ENCODE measurements at regions of chr22 and their contacts with region 1.

Region 1: GRCh38 chr22:50582562-50583293 is at the start of gene CHKB:
- DNase-seq: peak; percentile 96 to 97 (median 96)
- H3K4me3 ChIP-seq: peak within 1 kb of the TSS; percentile 39 to 82 (median 51)
- H3K4me3 Mint-ChIP-seq: peak within 1 kb of the TSS; percentile 82 to 94
- H3K27ac ChIP-seq: peak within 1 kb of the TSS; percentile 83 to 92
- H3K27ac Mint-ChIP-seq: peak within 1 kb of the TSS; percentile 79 to 95 (median 92)
- H3K4me1 ChIP-seq: peaks cover 22 to 40% of the 10 kb centered on the region in 2 donors
- H3K4me1 Mint-ChIP-seq: peaks cover 32% of the 10 kb centered on the region
- H3K27me3 ChIP-seq: peaks cover 0 to 3% of the 10 kb centered on the region in 2 donors
- H3K27me3 Mint-ChIP-seq: peaks cover 6 to 13% (median 10%) of the 10 kb centered on the region in 3 donors
- CTCF ChIP-seq: no peak
- polyA plus RNA-seq, gene CHKB: 29.1 to 286 (median 31.3) TPM

Region 2: GRCh38 chr22:50417411-50418210 is 165.1 kb before region 1 on chr22:
- intact Hi-C with region 1: no loop called
- DNase-seq: peak in 2 of 3 donors; percentile 3 to 37
- H3K4me3 ChIP-seq: no peak overlapping the region
- H3K4me3 Mint-ChIP-seq: no peak overlapping the region
- H3K27ac ChIP-seq: peak overlapping the region in 1 of 2 donors; percentile 40
- H3K27ac Mint-ChIP-seq: peak overlapping the region in 4 of 7 donors; percentile 2 to 78 (median 58)
- H3K4me1 ChIP-seq: no peaks in the 10 kb centered on the region
- H3K4me1 Mint-ChIP-seq: peaks cover 2% of the 10 kb centered on the region
- H3K27me3 ChIP-seq: no peaks in the 10 kb centered on the region
- H3K27me3 Mint-ChIP-seq: no peaks in the 10 kb centered on the region
- CTCF ChIP-seq: no peak

Region 3: DNA sequence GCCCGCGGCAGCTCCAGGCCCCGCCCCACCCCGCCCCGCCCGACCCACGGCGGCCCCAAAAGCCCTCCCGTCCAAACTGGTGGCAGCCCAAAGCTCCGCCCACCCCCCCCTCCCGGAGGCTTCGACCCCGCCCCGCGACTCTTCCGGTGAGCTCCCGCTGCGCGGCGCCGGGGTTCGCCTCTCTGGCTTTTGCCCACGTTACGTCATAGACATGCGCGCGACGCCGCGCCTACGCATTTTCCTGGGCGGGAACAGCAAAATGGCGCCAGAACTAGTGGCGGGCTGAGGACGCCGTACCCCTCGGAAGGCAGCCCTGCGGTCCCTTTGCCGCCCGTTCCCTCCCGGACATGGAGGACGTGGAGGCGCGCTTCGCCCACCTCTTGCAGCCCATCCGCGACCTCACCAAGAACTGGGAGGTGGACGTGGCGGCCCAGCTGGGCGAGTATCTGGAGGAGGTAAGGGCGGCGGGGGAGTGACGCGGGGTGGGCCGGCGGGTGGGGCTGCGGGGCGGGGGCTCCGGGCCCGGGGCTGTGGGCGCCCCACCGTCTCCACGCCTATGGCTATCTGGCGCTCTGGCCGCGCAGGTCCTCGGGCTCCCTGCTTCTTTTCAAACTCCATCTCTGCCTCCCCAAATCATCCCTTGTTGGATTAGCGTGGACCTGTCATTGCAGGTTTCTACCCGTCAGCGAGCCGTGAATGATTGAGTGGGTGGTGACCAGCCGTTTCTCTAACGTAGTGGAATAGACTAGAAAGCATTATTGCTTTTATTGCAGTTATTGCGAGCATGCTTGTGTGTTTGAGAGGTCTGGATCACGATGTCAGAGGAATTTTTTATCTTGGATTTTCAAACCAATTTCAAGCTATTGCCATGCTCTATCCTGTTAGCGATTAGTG is 74.5 kb before region 1 on chr22 and contains the start of gene NCAPH2:
- intact Hi-C with region 1: loop called (anchors 5 kb)
- DNase-seq: peak; percentile 95 to 99 (median 98)
- H3K4me3 ChIP-seq: peak within 1 kb of the TSS; percentile 92 to 98 (median 96)
- H3K4me3 Mint-ChIP-seq: peak within 1 kb of the TSS; percentile 95 to 96
- H3K27ac ChIP-seq: peak within 1 kb of the TSS; percentile 78 to 87
- H3K27ac Mint-ChIP-seq: peak within 1 kb of the TSS; percentile 86 to 97 (median 94)
- H3K4me1 ChIP-seq: peaks cover 19 to 26% of the 10 kb centered on the region in 2 donors
- H3K4me1 Mint-ChIP-seq: peaks cover 20% of the 10 kb centered on the region
- H3K27me3 ChIP-seq: no peaks in the 10 kb centered on the region
- H3K27me3 Mint-ChIP-seq: peaks cover 0 to 5% (median 0%) of the 10 kb centered on the region in 3 donors
- CTCF ChIP-seq: no peak
- polyA plus RNA-seq, gene NCAPH2: 12.5 to 23.6 (median 18.1) TPM

Region 4: DNA sequence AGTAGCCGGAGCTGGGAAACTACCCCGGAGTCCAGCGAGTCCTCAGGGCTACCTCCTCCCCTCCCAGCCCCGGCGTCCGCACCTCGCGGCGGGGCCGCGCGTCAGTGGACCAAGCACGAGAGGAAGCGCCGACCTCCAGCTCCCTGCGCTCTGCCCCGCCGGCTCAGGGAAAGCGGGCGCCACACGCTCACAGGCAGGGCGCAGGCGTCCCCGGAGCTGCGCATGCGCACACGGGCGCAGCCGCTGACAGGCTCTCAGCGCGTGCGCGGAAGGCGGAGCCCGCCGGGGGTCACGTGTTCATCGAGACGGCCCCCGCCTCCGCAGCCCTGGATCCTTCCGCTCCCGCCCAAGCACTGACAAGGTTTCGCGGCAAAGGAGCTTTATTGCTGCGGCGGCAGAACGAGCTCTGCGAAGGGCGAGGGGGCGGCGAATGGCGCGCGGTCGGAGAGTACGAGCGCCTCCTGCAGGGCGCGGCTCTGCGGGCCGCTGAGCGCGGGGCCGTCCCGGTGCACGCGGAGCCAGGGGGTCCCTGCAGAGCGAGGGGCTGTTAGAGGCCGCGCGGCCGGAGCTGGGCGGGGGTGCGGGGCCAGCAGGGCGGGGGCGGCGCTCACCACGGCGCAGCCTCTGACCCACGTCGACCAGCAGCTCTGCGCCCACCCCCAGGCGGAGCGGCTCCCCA is 57.2 kb before region 1 on chr22 and contains the start of gene SCO2:
- intact Hi-C with region 1: loop called (anchors 5 kb)
- DNase-seq: peak; percentile 93 to 94 (median 94)
- H3K4me3 ChIP-seq: peak within 1 kb of the TSS; percentile 72 to 99 (median 73)
- H3K4me3 Mint-ChIP-seq: peak within 1 kb of the TSS; percentile 91 to 95
- H3K27ac ChIP-seq: peak within 1 kb of the TSS; percentile 100
- H3K27ac Mint-ChIP-seq: peak within 1 kb of the TSS; percentile 94 to 100 (median 97)
- H3K4me1 ChIP-seq: peaks cover 42 to 68% of the 10 kb centered on the region in 2 donors
- H3K4me1 Mint-ChIP-seq: peaks cover 30% of the 10 kb centered on the region
- H3K27me3 ChIP-seq: no peaks in the 10 kb centered on the region
- H3K27me3 Mint-ChIP-seq: no peaks in the 10 kb centered on the region
- CTCF ChIP-seq: no peak
- polyA plus RNA-seq, gene SCO2: 39.5 to 101 (median 69.6) TPM

Region 5: DNA sequence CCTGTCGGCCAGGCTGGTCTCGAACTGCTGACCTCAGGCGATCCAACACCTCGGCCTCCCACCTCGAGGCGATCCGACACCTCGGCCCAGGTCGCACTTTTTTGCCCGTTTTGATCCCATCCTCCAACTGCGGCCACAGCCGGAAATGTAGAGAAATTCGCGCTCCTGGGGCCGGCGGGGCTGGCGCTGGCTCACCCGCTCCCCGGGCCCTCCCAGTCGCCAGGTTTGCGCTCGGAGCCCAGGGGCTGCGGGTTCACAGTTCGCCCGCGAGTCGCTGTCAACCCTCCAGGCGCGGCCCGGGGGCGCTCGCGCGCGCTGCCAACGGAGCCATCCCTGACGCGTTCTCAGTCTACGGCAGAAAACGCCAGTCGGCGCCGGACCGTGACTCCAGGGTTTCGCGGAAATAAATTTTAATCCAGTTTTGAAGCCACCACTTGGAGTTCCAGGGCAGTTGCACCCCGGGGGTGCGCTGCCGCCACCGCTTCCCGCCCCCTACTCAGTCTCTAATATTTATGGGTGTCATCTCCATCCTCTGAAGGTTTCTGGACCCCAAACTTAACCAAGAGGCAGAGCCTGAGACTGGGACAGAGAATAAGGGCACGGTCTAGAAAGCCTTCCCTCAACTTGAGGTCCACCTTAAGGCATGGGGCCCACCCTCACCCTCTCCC is 38.5 kb before region 1 on chr22:
- intact Hi-C with region 1: loop called in 1 of 2 experiments (anchors 5 kb)
- DNase-seq: peak; percentile 86 to 89 (median 86)
- H3K4me3 ChIP-seq: peak overlapping the region; percentile 18 to 73 (median 34)
- H3K4me3 Mint-ChIP-seq: peak overlapping the region; percentile 72 to 79
- H3K27ac ChIP-seq: peak overlapping the region; percentile 99 to 100
- H3K27ac Mint-ChIP-seq: peak overlapping the region; percentile 97 to 100 (median 99)
- H3K4me1 ChIP-seq: peaks cover 78 to 96% of the 10 kb centered on the region in 2 donors
- H3K4me1 Mint-ChIP-seq: peaks cover 66% of the 10 kb centered on the region
- H3K27me3 ChIP-seq: no peaks in the 10 kb centered on the region
- H3K27me3 Mint-ChIP-seq: peaks cover 1 to 20% (median 3%) of the 10 kb centered on the region in 3 donors
- CTCF ChIP-seq: peak; percentile 76

Region 6: DNA sequence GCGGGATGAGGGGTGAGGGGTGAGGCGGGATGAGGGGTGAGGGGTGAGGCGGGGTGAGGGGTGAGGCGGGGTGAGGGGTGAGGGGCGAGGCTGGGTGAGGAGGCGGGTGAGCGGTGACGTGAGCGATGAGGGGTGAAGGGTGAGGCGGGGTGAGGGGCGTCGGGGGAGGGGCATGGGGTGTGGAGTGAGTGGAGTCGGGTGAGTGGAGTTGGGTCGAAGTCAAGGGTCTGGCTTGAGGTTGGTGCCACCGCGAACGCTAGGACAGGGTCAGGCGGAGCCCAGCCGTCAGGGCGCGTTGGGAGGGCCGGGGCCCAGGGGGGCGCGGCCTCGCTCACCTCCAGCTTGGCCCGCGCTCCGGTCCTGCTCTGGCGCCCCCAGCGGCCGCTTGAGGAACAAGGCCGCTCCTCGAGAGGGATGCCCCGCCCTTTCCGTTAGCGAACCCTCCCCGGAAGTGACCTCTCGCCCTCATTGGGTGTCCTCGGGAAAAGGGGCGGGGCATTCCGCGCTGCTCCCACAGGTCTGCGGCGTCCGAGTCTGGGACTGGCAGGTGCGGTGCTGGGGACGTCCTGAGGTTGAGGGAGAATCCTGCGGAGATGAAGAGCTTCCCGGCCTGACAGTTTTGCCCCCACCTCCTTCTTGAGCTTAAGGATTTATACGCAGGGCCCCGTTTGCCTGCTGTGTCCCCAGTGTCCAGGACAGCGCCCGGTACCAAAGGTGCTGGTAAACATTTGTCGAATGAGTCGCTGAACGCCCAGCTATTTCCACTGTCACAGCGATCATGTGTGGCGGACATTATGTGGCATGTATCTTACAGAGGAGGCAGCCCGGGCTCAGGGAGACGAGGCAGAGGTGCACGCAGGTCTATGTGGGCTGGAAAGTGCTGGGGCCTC is 20.0 kb before region 1 on chr22 and contains the start of gene SYCE3:
- intact Hi-C with region 1: loop called in 1 of 2 experiments (anchors 2 kb)
- DNase-seq: peak; percentile 94 to 96 (median 95)
- H3K4me3 ChIP-seq: peak within 1 kb of the TSS; percentile 53 to 94 (median 66)
- H3K4me3 Mint-ChIP-seq: peak within 1 kb of the TSS; percentile 88 to 96
- H3K27ac ChIP-seq: peak within 1 kb of the TSS in 1 of 2 donors; percentile 45
- H3K27ac Mint-ChIP-seq: peak within 1 kb of the TSS; percentile 57 to 95 (median 73)
- H3K4me1 ChIP-seq: peaks cover 8 to 13% of the 10 kb centered on the region in 2 donors
- H3K4me1 Mint-ChIP-seq: peaks cover 17% of the 10 kb centered on the region
- H3K27me3 ChIP-seq: peaks cover 0 to 8% of the 10 kb centered on the region in 2 donors
- H3K27me3 Mint-ChIP-seq: peaks cover 17 to 22% (median 17%) of the 10 kb centered on the region in 3 donors
- CTCF ChIP-seq: peak; percentile 87
- polyA plus RNA-seq, gene SYCE3: 1.9 to 3.1 TPM in 2 of 3 donors, not detected in the other

Region 7: GRCh38 chr22:50627642-50628542 is 45.2 kb after region 1 on chr22 and contains the start of gene ARSA:
- intact Hi-C with region 1: loop called in 1 of 2 experiments (anchors 5 kb)
- DNase-seq: peak; percentile 81 to 89 (median 81)
- H3K4me3 ChIP-seq: peak within 1 kb of the TSS; percentile 89 to 96 (median 96)
- H3K4me3 Mint-ChIP-seq: peak within 1 kb of the TSS; percentile 82 to 87
- H3K27ac ChIP-seq: peak within 1 kb of the TSS; percentile 45 to 74
- H3K27ac Mint-ChIP-seq: peak within 1 kb of the TSS; percentile 38 to 83 (median 65)
- H3K4me1 ChIP-seq: peaks cover 22 to 29% of the 10 kb centered on the region in 2 donors
- H3K4me1 Mint-ChIP-seq: peaks cover 23% of the 10 kb centered on the region
- H3K27me3 ChIP-seq: no peaks in the 10 kb centered on the region
- H3K27me3 Mint-ChIP-seq: peaks cover 0 to 4% (median 3%) of the 10 kb centered on the region in 3 donors
- CTCF ChIP-seq: peak; percentile 28
- polyA plus RNA-seq, gene ARSA: 11.9 to 85.2 (median 12.1) TPM